ENCODE measurements at regions of chr7 and their contacts with region 1.

Region 1: DNA sequence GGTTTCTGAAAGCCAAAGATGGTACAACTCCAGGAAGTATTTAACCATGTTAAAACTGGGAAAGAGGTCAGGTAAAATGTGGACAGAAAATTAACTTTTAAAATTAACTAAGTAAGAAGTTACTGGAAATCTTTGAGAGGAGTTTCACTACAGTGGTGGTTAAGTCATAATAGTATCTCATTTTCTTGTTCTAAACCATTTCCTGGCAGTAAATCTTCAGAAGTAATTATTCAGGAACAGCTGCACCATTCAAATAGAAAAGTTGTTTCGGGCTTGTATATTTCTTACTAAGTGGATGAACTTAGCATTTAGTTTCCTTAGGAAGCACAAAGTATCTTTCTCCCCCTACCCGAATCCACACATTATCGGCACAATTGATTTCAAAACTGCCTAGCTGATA is 27.1 kb downstream of the COPG2 start:
- DNase-seq: no peak
- H3K4me3 ChIP-seq: no peak overlapping the region
- H3K27ac ChIP-seq: no peak overlapping the region
- H3K4me1 ChIP-seq: no peaks in the 10 kb centered on the region
- H3K27me3 ChIP-seq: no peaks in the 10 kb centered on the region
- CTCF ChIP-seq: no peak
- POLR2A ChIP-seq: no peak

Region 2: DNA sequence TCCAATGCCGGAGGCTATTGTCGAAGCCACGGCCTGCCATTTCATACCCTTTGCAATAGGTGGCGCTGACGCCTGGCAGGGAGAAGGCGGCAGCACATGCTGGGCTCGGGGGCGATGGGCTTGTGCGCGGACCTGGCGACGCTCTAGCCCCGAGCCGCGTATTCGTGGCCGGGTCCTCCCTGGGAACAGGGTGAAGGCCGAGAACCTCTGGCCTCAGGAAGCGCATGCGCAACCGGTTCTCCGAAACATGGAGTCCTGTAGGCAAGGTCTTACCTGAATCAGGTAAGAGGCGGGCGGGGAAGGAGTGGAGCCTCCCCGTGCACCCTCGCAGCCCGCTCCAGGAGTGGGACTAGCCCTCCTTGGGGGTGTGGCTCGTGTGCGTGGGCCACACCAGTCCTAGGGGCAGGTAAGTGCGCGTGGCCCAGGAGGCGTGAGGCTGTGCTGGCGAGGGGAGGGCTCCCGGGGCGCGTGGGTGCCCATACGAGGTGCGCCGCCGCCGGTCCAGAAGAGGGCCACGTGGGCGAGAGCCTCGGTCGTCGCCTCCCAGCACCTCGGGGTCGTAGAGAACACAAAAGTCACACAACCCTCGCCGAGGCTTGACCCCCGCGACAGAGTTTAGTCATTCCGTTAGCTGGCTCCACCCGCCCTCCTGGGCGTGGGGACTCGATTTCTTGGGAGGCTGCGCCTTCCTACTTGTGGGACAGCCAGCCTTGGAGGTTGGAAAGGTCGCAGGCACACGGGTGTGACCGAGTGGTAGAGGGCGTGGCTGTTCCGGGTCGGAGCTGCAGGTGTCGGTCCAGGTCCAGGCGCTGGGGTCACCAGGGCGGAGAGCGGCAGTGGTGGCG is 155.2 kb before region 1 on chr7:
- intact Hi-C with region 1: no loop called
- DNase-seq: peak; percentile 62 to 64
- H3K4me3 ChIP-seq: peak overlapping the region; percentile 35 to 73 (median 60)
- H3K27ac ChIP-seq: peak overlapping the region; percentile 81 to 83
- H3K4me1 ChIP-seq: no peaks in the 10 kb centered on the region
- H3K27me3 ChIP-seq: no peaks in the 10 kb centered on the region
- CTCF ChIP-seq: peak; percentile 50 to 77 (median 71)
- POLR2A ChIP-seq: no peak

Region 3: GRCh38 chr7:131564640-131565039 is 923.1 kb after region 1 on chr7:
- intact Hi-C with region 1: loop called (anchors 5 kb)
- DNase-seq: no peak
- H3K4me3 ChIP-seq: no peak overlapping the region
- H3K27ac ChIP-seq: no peak overlapping the region
- H3K4me1 ChIP-seq: no peaks in the 10 kb centered on the region
- H3K27me3 ChIP-seq: no peaks in the 10 kb centered on the region
- CTCF ChIP-seq: no peak
- POLR2A ChIP-seq: no peak

Measured in breast epithelium (tissue), 4 donors.